Caco-2 (cell line): ENCODE measurements at regions of chr1 and their contacts with region 1.

Region 1: GRCh38 chr1:200896531-200897196 is 2.0 kb downstream of the INAVA start:
- DNase-seq: peak; percentile 97 to 98
- H3K4me3 ChIP-seq: peak overlapping the region; percentile 73
- H3K4me3 Mint-ChIP-seq: peak overlapping the region; percentile 97
- H3K27ac Mint-ChIP-seq: peak overlapping the region; percentile 94
- H3K4me1 ChIP-seq: peaks cover 38% of the 10 kb centered on the region
- H3K4me1 Mint-ChIP-seq: peaks cover 38% of the 10 kb centered on the region
- H3K27me3 ChIP-seq: no peaks in the 10 kb centered on the region
- H3K27me3 Mint-ChIP-seq: no peaks in the 10 kb centered on the region
- CTCF ChIP-seq: no peak

Region 2: GRCh38 chr1:200669314-200670241 is 227.1 kb before region 1 on chr1 and contains the start of gene DDX59:
- CTCF ChIA-PET with region 1: no interaction called
- POLR2A ChIA-PET with region 1: interaction called, 13 read pairs
- intact Hi-C with region 1: loop called (anchors 5 kb)
- DNase-seq: peak; percentile 97
- H3K4me3 ChIP-seq: peak within 1 kb of the TSS; percentile 97
- H3K4me3 Mint-ChIP-seq: peak within 1 kb of the TSS; percentile 99
- H3K27ac Mint-ChIP-seq: peak within 1 kb of the TSS; percentile 99
- H3K4me1 ChIP-seq: peaks cover 16% of the 10 kb centered on the region
- H3K4me1 Mint-ChIP-seq: peaks cover 10% of the 10 kb centered on the region
- H3K27me3 ChIP-seq: no peaks in the 10 kb centered on the region
- H3K27me3 Mint-ChIP-seq: no peaks in the 10 kb centered on the region
- CTCF ChIP-seq: no peak
- total RNA-seq, gene DDX59: 13.5 and 16.3 TPM in 2 replicates

Region 3: DNA sequence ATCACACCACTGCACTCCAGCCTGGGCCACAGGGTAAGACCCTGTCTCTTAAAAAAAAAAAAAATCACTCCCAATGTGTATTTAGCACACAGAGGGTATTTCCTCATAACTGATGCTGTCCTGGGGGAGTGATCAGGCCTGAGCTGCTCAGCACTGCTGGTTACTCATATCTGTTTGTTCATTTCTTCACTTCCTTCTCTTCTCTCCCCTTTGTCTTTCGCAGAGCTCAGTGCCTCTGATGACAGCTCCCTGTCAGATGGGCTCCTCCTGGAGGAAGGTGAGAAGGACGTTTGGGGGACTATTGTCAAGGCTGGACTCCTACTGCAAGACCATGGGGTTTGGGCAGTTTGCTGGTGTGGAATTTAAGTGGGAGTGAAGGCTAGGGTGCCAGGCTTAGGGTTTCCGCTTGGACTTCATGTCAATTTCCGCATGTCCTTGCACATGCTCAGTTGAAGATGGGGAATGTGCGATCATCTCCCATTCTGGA is 11.0 kb after region 1 on chr1:
- CTCF ChIA-PET with region 1: interaction called, 5 read pairs
- POLR2A ChIA-PET with region 1: interaction called, 17 read pairs
- intact Hi-C with region 1: loop called (anchors 1 kb)
- DNase-seq: peak in 1 of 2 experiments; percentile 38
- H3K4me3 ChIP-seq: no peak overlapping the region
- H3K4me3 Mint-ChIP-seq: no peak overlapping the region
- H3K27ac Mint-ChIP-seq: peak overlapping the region; percentile 60
- H3K4me1 ChIP-seq: peaks cover 3% of the 10 kb centered on the region; the same call in 1 of the 2 replicates
- H3K4me1 Mint-ChIP-seq: peaks cover 11% of the 10 kb centered on the region
- H3K27me3 ChIP-seq: no peaks in the 10 kb centered on the region
- H3K27me3 Mint-ChIP-seq: no peaks in the 10 kb centered on the region
- CTCF ChIP-seq: no peak

Region 4: GRCh38 chr1:201042779-201043461 is 146.3 kb after region 1 on chr1:
- CTCF ChIA-PET with region 1: interaction called, 13 read pairs
- POLR2A ChIA-PET with region 1: no interaction called
- intact Hi-C with region 1: loop called (anchors 1 kb)
- DNase-seq: peak; percentile 67 to 73
- H3K4me3 ChIP-seq: no peak overlapping the region
- H3K4me3 Mint-ChIP-seq: no peak overlapping the region
- H3K27ac Mint-ChIP-seq: no peak overlapping the region
- H3K4me1 ChIP-seq: no peaks in the 10 kb centered on the region
- H3K4me1 Mint-ChIP-seq: no peaks in the 10 kb centered on the region
- H3K27me3 ChIP-seq: no peaks in the 10 kb centered on the region
- H3K27me3 Mint-ChIP-seq: peaks cover 2% of the 10 kb centered on the region
- CTCF ChIP-seq: peak; percentile 83 to 85

Region 5: GRCh38 chr1:201170533-201171062 is 273.9 kb after region 1 on chr1:
- CTCF ChIA-PET with region 1: no interaction called
- POLR2A ChIA-PET with region 1: no interaction called
- intact Hi-C with region 1: loop called (anchors 1 kb)
- DNase-seq: peak; percentile 99
- H3K4me3 ChIP-seq: peak overlapping the region; percentile 33
- H3K4me3 Mint-ChIP-seq: peak overlapping the region; percentile 84
- H3K27ac Mint-ChIP-seq: peak overlapping the region; percentile 91
- H3K4me1 ChIP-seq: peaks cover 44% of the 10 kb centered on the region
- H3K4me1 Mint-ChIP-seq: peaks cover 42% of the 10 kb centered on the region
- H3K27me3 ChIP-seq: no peaks in the 10 kb centered on the region
- H3K27me3 Mint-ChIP-seq: no peaks in the 10 kb centered on the region
- CTCF ChIP-seq: no peak